Dorsolateral prefrontal cortex (tissue), 120 donors: ENCODE measurements at regions of chr17 and their contacts with region 1.

Region 1: GRCh38 chr17:11644261-11645212 is 46.3 kb downstream of the DNAH9 start:
- DNase-seq: peak in 9 of 10 donors; percentile 30 to 81 (median 61)
- H3K4me3 ChIP-seq: peak overlapping the region in 47 of 59 donors; percentile 1 to 62 (median 36)
- H3K27ac ChIP-seq: no peak overlapping the region
- H3K27me3 ChIP-seq: no peaks in the 10 kb centered on the region
- CTCF ChIP-seq: peak; percentile 75 to 97 (median 87)

Region 2: DNA sequence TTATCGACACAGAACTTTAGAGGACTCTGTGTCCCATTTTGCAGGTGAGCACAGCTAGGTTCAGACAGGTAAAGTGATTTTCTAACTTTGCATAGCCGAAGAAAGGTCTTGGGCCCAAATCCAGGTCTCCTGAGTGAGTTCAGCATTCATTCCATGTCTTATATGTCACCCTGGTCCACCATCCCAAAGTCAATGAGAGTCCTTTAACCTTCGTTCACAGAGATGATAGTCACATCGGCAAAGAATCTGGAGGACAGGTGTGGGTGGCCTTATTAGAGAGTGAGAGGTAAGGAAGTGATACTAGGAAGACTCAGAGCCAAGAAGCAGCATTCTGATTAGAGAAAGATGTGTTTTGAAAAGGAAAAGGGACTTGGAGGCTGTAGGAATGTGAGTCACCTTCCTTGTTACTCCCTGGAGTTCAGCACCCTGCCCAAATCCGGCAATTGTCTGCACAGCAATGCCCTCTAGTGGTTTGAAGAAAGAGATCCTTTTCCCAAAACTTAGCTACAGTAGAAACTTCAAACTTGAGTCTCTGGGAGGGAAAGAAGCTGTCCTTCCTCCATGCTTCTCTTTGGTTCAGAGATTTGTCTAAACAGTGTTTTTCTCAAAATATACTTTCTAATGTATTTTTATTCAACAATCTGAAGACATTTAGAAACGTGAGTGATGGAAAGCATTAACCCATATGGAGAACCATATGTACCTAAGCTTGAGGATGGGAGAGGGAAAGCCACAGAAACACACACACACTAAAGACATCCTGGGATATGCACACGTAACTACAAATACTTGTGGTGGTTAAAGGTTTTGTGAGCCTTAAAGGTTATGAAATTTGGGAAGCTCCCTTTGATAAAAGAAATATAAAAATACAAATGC is 499.9 kb before region 1 on chr17:
- intact Hi-C with region 1: loop called in 1 of 2 experiments (anchors 10 kb)
- DNase-seq: peak in 5 of 10 donors; percentile 24 to 48 (median 39)
- H3K4me3 ChIP-seq: no peak overlapping the region
- H3K27ac ChIP-seq: no peak overlapping the region
- H3K27me3 ChIP-seq: no peaks in the 10 kb centered on the region
- CTCF ChIP-seq: peak; percentile 55 to 89 (median 78)

Region 3: DNA sequence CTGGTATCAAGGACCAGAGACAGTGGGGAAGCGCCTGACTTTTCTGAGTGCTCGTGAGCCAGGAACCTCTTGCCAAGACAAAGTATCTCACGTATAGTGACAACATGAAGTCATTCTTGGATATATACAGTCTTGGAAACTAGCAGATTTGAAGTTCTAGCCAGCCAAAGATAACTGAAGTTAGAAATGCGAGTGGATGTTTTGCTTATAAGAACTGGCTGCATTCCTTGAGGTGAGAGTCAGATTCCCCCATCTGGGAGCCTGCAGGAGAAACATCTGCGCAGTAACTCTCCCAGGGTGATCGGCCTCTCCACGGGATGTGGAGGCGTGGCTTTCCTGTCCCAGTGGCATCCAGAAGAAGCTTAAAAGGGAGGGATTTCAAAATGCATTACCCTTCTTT is 313.7 kb before region 1 on chr17:
- intact Hi-C with region 1: loop called in 1 of 2 experiments (anchors 10 kb)
- DNase-seq: no peak
- H3K4me3 ChIP-seq: no peak overlapping the region
- H3K27ac ChIP-seq: peak overlapping the region in 4 of 59 donors; percentile 1 to 65 (median 16)
- H3K27me3 ChIP-seq: no peaks in the 10 kb centered on the region
- CTCF ChIP-seq: no peak

Region 4: GRCh38 chr17:11880714-11881113 is 236.2 kb after region 1 on chr17:
- intact Hi-C with region 1: loop called in 1 of 2 experiments (anchors 10 kb)
- DNase-seq: no peak
- H3K4me3 ChIP-seq: no peak overlapping the region
- H3K27ac ChIP-seq: no peak overlapping the region
- H3K27me3 ChIP-seq: no peaks in the 10 kb centered on the region
- CTCF ChIP-seq: peak in 55 of 56 donors; percentile 20 to 67 (median 52)